Endothelial cell of umbilical vein (primary cell): ENCODE measurements at regions of chr7 and their contacts with region 1.

Region 1: DNA sequence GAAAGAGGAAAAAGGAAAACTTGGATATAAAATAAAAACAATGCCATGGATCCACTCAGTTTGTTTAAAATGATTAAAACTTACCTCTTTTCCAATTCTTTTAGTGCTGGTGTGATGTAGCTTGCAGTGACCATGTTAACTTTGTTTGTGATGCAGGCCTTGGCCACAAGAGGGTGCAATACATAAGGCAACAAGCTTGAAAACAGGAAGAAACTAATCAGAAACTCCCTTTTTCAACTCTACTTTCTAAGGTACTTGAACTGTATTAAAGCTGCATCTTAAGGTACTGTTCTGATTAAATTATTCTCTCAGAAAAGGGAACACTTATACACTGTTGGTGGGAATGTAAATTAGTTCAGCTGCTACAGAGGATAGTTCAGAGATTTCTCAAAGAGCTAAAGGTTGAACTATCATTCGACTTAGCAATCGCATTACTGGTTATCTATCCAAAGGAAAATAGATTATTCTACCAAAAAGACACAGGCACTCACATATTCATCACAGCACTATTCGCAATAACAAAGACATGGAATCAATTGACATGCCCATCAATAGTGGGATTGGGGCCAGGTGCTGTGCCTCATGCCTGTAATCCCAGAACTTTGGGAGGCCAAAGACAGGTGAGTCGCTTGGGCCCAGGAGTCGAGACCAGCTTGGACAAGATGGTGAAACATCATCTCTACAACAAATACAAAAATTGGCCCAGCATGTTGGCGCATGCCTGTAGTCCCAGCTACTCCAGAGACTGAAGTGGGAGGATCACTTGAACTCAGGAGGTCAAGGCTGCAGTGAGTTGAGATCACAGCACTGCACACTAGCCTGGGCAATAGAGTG is 50.9 kb downstream of the AASS start:
- DNase-seq: peak; percentile 82
- H3K4me3 ChIP-seq: no peak overlapping the region
- H3K27ac ChIP-seq: no peak overlapping the region
- H3K4me1 ChIP-seq: no peaks in the 10 kb centered on the region
- H3K27me3 ChIP-seq: no peaks in the 10 kb centered on the region
- CTCF ChIP-seq: peak; percentile 75 to 84
- POLR2A ChIP-seq: no peak

Region 2: DNA sequence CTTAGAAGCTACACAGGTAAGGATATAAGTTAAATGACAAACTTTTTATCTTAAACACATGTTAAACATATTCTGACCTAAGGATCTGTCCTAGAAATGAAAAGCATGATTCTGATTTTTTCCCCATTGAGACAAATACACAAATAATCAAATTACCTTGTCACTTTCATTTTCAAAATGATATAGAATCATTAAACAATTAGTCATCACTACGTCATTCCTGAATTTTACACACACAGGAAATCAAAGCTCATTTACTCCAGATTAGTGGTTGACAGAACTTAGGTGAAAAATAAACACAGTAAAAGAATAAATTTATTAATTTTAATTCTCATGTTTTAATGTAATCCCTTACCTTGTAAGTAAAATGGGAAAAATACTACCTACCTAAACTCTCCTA is 38.1 kb before region 1 on chr7:
- CTCF ChIA-PET with region 1: interaction called, 15 read pairs
- POLR2A ChIA-PET with region 1: no interaction called
- dilution Hi-C with region 1: no loop called
- intact Hi-C with region 1: no loop called
- DNase-seq: peak; percentile 48
- H3K4me3 ChIP-seq: peak overlapping the region in 1 of 3 experiments; percentile 17
- H3K27ac ChIP-seq: no peak overlapping the region
- H3K4me1 ChIP-seq: peaks cover 8% of the 10 kb centered on the region
- H3K27me3 ChIP-seq: no peaks in the 10 kb centered on the region
- CTCF ChIP-seq: no peak
- POLR2A ChIP-seq: no peak

Region 3: DNA sequence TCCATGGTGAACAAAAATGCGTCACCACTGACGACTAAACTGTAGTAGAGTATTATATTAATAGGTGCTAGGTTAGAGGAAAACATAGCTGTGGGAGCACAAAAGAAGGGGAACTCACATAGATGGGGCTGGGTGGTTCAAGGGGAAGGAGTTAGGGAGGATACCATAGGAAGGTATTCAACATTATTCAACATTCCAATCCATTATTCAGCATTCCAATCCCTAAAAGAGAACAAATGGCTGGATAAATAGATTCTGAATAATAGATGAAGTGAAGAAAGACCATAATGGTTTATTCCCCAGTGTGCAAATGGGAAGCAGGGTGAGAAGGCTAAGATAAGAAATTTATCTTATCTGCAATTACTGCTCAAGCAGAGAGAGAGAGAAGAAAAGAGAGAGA is 10.5 kb before region 1 on chr7:
- CTCF ChIA-PET with region 1: interaction called, 30 read pairs
- POLR2A ChIA-PET with region 1: interaction called, 3 read pairs
- dilution Hi-C with region 1: no loop called
- intact Hi-C with region 1: no loop called
- DNase-seq: no peak
- H3K4me3 ChIP-seq: no peak overlapping the region
- H3K27ac ChIP-seq: no peak overlapping the region
- H3K4me1 ChIP-seq: no peaks in the 10 kb centered on the region
- H3K27me3 ChIP-seq: no peaks in the 10 kb centered on the region
- CTCF ChIP-seq: no peak
- POLR2A ChIP-seq: no peak

Region 4: DNA sequence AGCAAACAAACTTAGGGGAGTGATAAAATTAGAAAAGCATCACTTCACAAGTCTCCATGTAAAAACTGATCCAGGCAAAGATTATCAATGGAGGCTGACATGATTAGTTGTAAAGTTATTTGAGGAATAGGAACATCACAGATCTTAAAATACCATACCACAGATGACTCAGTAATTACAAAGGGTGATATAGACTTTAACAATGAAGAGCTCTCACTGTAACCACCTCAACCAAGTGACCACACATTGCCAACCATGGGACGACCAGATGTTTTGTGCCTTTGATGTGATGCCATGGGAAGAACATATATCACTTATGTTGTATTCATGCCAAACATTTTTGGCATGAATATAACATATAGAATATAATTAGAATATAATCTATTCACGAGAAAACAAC is 39.2 kb after region 1 on chr7:
- CTCF ChIA-PET with region 1: interaction called, 15 read pairs
- POLR2A ChIA-PET with region 1: no interaction called
- dilution Hi-C with region 1: no loop called
- intact Hi-C with region 1: no loop called
- DNase-seq: no peak
- H3K4me3 ChIP-seq: no peak overlapping the region
- H3K27ac ChIP-seq: no peak overlapping the region
- H3K4me1 ChIP-seq: no peaks in the 10 kb centered on the region
- H3K27me3 ChIP-seq: no peaks in the 10 kb centered on the region
- CTCF ChIP-seq: no peak
- POLR2A ChIP-seq: no peak

Region 5: DNA sequence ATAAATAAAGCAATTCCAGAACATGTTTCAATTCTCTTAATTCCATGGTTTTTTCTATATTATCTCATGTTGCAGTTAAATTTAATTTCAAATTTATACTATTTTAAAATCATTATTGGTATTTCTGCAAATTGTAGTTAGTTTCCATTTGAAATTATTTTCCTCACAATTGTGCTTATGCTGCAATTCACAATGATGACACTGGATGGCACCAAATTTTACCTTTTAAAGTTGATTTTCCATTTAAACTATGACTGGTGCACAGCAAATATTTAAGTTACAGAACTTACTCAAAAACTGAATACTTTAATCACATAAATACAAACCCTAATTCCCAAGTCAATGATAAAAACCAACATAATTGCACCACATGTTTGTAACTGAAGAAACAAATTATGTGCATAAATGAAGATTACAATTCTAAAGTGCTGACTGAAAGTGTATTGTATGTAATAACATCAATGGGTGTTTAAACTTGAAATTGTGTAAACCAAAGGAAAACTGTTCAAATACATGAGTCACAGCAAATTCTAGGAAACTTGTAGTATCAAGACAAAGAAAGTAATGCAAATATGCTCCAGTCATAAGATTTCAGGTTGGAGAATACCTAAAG is 126.2 kb after region 1 on chr7:
- CTCF ChIA-PET with region 1: interaction called, 34 read pairs
- POLR2A ChIA-PET with region 1: no interaction called
- dilution Hi-C with region 1: no loop called
- intact Hi-C with region 1: loop called (anchors 5 kb)
- DNase-seq: peak; percentile 56
- H3K4me3 ChIP-seq: no peak overlapping the region
- H3K27ac ChIP-seq: no peak overlapping the region
- H3K4me1 ChIP-seq: no peaks in the 10 kb centered on the region
- H3K27me3 ChIP-seq: no peaks in the 10 kb centered on the region
- CTCF ChIP-seq: peak; percentile 30 to 33
- POLR2A ChIP-seq: no peak

Region 6: GRCh38 chr7:122329145-122329802 is 236.1 kb after region 1 on chr7:
- CTCF ChIA-PET with region 1: no interaction called
- POLR2A ChIA-PET with region 1: no interaction called
- dilution Hi-C with region 1: no loop called
- intact Hi-C with region 1: no loop called
- DNase-seq: no peak
- H3K4me3 ChIP-seq: no peak overlapping the region
- H3K27ac ChIP-seq: no peak overlapping the region
- H3K4me1 ChIP-seq: no peaks in the 10 kb centered on the region
- H3K27me3 ChIP-seq: no peaks in the 10 kb centered on the region
- CTCF ChIP-seq: no peak
- POLR2A ChIP-seq: no peak

Region 7: GRCh38 chr7:122528879-122529481 is 435.8 kb after region 1 on chr7:
- CTCF ChIA-PET with region 1: interaction called, 90 read pairs
- POLR2A ChIA-PET with region 1: no interaction called
- dilution Hi-C with region 1: no loop called
- intact Hi-C with region 1: loop called (anchors 1 kb)
- DNase-seq: peak; percentile 68
- H3K4me3 ChIP-seq: no peak overlapping the region
- H3K27ac ChIP-seq: no peak overlapping the region
- H3K4me1 ChIP-seq: no peaks in the 10 kb centered on the region
- H3K27me3 ChIP-seq: no peaks in the 10 kb centered on the region
- CTCF ChIP-seq: peak; percentile 26 to 28
- POLR2A ChIP-seq: no peak